SK-N-SH (cell line): ENCODE measurements at regions of chr11 and their contacts with region 1.

Region 1: DNA sequence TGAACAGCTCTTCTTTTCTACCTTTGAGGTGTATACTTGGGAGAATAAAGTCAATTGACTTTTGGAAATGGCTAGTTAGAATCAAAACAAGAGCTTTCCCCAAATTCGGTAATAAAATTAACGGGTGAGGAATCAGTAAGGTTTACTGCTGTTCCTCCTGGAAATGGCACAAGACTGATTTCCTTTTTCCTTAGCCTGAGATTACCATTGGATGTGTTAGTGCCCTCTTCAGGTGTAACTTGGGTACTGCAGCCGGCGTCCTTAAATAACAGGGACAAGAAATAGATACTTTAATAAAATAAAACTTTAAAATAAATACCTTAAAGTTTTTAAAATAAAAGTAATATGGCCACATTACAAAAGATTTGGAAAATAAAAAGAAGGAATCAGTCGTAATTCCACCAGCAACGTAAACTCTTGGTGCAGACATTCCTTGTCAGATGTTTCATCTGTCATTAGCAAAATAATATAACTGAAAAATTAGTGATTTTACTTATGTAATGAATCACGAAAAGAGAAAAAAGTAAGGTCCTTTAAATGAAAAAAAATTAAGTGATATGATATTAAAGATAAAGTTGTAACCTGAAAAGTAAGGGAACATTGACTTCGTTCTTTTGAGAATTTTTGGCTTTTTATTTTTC is 29.7 kb downstream of the ZFTA start:
- DNase-seq: peak; percentile 50
- H3K4me3 ChIP-seq: no peak overlapping the region; a peak in 1 of 4 replicates
- H3K27ac ChIP-seq: no peak overlapping the region
- H3K4me1 ChIP-seq: 0 out of 4 replicates have a peak, but pooled peaks cover 0 to 14% of the 10 kb centered on the region in 2 experiments
- H3K27me3 ChIP-seq: no peaks in the 10 kb centered on the region
- CTCF ChIP-seq: peak; percentile 82
- EP300 ChIP-seq: no peak
- RAD21 ChIP-seq: peak; percentile 79

Region 2: GRCh38 chr11:63635762-63636465 is 102.9 kb before region 1 on chr11:
- CTCF ChIA-PET with region 1: interaction called, 15 read pairs
- POLR2A ChIA-PET with region 1: no interaction called
- DNase-seq: peak; percentile 67
- H3K4me3 ChIP-seq: no peak overlapping the region; a peak in 1 of 4 replicates
- H3K27ac ChIP-seq: no peak overlapping the region
- H3K4me1 ChIP-seq: no peaks in the 10 kb centered on the region
- H3K27me3 ChIP-seq: no peaks in the 10 kb centered on the region
- CTCF ChIP-seq: peak; percentile 88
- EP300 ChIP-seq: no peak
- RAD21 ChIP-seq: peak; percentile 91

Region 3: DNA sequence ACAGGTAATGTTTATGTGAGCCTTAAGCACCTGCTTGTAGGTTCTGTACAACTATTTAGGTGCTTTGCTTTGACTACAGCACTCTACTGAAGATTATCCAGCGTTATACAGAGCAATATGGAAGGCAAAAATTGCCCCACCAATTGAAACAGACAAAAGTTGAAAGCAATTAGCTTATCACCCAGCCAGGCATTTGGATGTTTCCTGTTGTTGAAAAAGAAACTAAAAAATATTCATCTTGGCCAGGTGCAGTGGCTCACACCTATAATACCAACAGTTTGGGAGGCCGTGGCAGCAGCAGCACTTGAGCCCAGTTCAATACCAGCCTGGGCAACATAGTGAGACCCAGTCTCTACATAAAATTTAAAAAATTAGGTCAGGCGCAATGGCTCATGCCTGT is 86.2 kb before region 1 on chr11:
- CTCF ChIA-PET with region 1: interaction called, 12 read pairs
- POLR2A ChIA-PET with region 1: no interaction called
- DNase-seq: no peak
- H3K4me3 ChIP-seq: no peak overlapping the region
- H3K27ac ChIP-seq: no peak overlapping the region
- H3K4me1 ChIP-seq: no peaks in the 10 kb centered on the region
- H3K27me3 ChIP-seq: no peaks in the 10 kb centered on the region
- CTCF ChIP-seq: no peak
- EP300 ChIP-seq: no peak
- RAD21 ChIP-seq: no peak

Region 4: GRCh38 chr11:63681321-63682049 is 57.4 kb before region 1 on chr11 and contains the start of gene RTN3:
- CTCF ChIA-PET with region 1: interaction called, 17 read pairs
- POLR2A ChIA-PET with region 1: no interaction called
- DNase-seq: peak; percentile 98
- H3K4me3 ChIP-seq: peak within 1 kb of the TSS; percentile 63 to 97
- H3K27ac ChIP-seq: peak within 1 kb of the TSS; percentile 83 to 91
- H3K4me1 ChIP-seq: peaks cover 4% of the 10 kb centered on the region in 2 experiments; a peak in 3 of 4 replicates
- H3K27me3 ChIP-seq: no peaks in the 10 kb centered on the region
- CTCF ChIP-seq: no peak
- EP300 ChIP-seq: no peak
- RAD21 ChIP-seq: no peak
- polyA plus RNA-seq, gene RTN3: 52.7 and 59.0 TPM in 2 replicates

Region 5: GRCh38 chr11:63713766-63714165 is 25.1 kb before region 1 on chr11:
- CTCF ChIA-PET with region 1: interaction called, 28 read pairs
- POLR2A ChIA-PET with region 1: no interaction called
- DNase-seq: no peak
- H3K4me3 ChIP-seq: no peak overlapping the region
- H3K27ac ChIP-seq: no peak overlapping the region
- H3K4me1 ChIP-seq: peaks cover 0 to 15% of the 10 kb centered on the region in 2 experiments; a peak in 1 of 4 replicates
- H3K27me3 ChIP-seq: no peaks in the 10 kb centered on the region
- CTCF ChIP-seq: no peak
- EP300 ChIP-seq: no peak
- RAD21 ChIP-seq: no peak

Region 6: GRCh38 chr11:63749624-63750023 is 10.8 kb after region 1 on chr11:
- CTCF ChIA-PET with region 1: interaction called, 16 read pairs
- POLR2A ChIA-PET with region 1: no interaction called
- DNase-seq: no peak
- H3K4me3 ChIP-seq: no peak overlapping the region
- H3K27ac ChIP-seq: no peak overlapping the region
- H3K4me1 ChIP-seq: no peaks in the 10 kb centered on the region
- H3K27me3 ChIP-seq: no peaks in the 10 kb centered on the region
- CTCF ChIP-seq: no peak
- EP300 ChIP-seq: no peak
- RAD21 ChIP-seq: no peak

Region 7: DNA sequence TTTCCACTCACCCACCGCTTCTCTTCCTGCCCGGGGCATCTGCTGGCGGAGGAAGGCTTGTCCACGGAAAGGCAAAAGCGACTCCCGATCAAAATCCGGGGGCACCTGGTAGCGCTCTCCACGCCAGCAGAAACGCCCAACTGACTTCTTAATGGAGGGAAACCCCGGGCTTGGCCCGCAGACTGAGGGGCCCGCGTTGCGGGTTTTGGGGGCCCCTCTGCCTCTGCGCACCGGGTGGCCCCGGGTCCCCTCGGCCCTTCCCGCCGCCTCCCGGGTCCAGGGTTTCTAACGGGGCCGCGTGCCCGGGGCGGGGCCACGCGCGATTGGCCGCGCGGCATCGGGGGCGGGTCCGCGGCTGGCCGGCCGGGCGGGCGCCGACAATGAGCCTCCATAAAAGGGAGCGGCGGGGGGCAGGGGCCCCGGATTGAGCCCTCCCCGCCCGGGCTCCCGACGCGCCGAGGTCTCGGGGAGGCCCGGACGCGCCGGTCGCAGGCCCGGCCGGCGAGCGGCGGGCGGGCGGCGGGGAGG is 74.3 kb after region 1 on chr11 and contains the start of gene SPINDOC:
- CTCF ChIA-PET with region 1: no interaction called
- POLR2A ChIA-PET with region 1: no interaction called
- DNase-seq: peak; percentile 98
- H3K4me3 ChIP-seq: peak within 1 kb of the TSS; percentile 72 to 91
- H3K27ac ChIP-seq: peak within 1 kb of the TSS; percentile 68 to 82
- H3K4me1 ChIP-seq: peaks cover 9 to 15% of the 10 kb centered on the region in 2 experiments; a peak in 3 of 4 replicates
- H3K27me3 ChIP-seq: no peaks in the 10 kb centered on the region
- CTCF ChIP-seq: no peak
- EP300 ChIP-seq: no peak
- RAD21 ChIP-seq: no peak
- polyA plus RNA-seq, gene SPINDOC: 39.2 and 45.0 TPM in 2 replicates